A673 (cell line): ENCODE measurements at regions of chr10 and their contacts with region 1.

Region 1: DNA sequence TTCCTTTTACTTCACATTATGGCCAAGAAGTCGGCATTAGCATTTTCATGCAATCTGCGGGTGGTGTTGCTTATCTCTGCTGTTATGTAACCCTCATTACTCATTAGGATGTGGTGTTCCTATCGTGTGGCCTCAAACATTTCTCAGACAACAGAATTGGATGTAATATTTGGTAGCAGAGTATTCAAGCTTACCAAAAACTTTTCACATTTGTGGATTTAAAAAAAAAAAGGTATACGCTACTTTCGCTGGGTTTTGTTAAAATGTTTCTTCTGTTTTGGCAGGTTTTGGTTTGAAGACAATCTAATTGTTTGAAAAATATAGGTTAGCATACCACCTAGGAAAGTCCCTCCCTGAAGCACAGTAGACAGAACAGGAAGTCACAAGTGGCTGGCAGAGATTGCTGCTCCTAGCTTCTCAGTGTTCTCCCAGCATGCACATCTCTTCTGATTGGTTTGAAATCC is 128.8 kb downstream of the GATA3 start:
- DNase-seq: peak; percentile 28
- H3K4me3 ChIP-seq: no peak overlapping the region
- H3K27ac ChIP-seq: no peak overlapping the region
- H3K4me1 ChIP-seq: peaks cover 17% of the 10 kb centered on the region
- H3K27me3 ChIP-seq: no peaks in the 10 kb centered on the region
- CTCF ChIP-seq: no peak

Region 2: GRCh38 chr10:7151538-7151937 is 1031.7 kb before region 1 on chr10:
- CTCF ChIA-PET with region 1: no interaction called
- POLR2A ChIA-PET with region 1: interaction called, 19 read pairs
- intact Hi-C with region 1: no loop called
- DNase-seq: no peak
- H3K4me3 ChIP-seq: no peak overlapping the region
- H3K27ac ChIP-seq: no peak overlapping the region
- H3K4me1 ChIP-seq: no peaks in the 10 kb centered on the region
- H3K27me3 ChIP-seq: peaks cover 52% of the 10 kb centered on the region
- CTCF ChIP-seq: no peak

Region 3: GRCh38 chr10:8296090-8296733 is 112.9 kb after region 1 on chr10:
- CTCF ChIA-PET with region 1: no interaction called
- POLR2A ChIA-PET with region 1: no interaction called
- intact Hi-C with region 1: loop called (anchors 5 kb)
- DNase-seq: peak; percentile 21
- H3K4me3 ChIP-seq: no peak overlapping the region
- H3K27ac ChIP-seq: no peak overlapping the region
- H3K4me1 ChIP-seq: peaks cover 18% of the 10 kb centered on the region
- H3K27me3 ChIP-seq: peaks cover 58% of the 10 kb centered on the region
- CTCF ChIP-seq: no peak